ENCODE measurements at regions of chr10 and their contacts with region 1.

Region 1: DNA sequence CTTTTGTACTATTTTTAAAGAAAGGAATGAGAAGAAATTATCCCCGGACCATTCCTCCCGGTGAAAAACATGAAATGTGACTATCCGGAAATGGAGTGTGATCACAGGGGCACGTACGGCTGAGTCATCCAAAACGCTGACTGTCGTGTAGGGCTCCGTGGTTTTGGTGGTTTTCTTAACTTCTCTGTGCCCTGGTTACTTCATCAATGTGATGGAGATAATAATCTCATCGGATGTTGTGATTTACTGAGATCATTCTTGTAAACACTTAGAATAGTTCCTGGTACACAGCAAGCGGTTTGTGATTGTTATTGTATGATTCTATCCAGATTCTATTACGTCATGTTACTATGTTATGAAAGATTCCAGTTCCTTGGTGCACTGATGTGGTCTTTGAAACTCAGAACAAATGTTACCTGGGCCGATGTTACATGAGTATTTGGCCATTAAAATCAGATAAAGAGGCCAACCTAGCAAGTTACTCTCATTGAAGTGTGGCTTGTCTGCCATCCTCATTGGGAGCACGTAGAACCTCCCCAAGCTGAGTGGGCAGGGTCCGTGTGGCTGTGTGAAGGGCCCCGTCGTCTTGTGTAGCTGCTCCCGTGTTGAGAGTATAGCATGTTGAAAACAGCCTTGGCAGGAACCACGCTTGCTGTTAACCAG is 99.5 kb downstream of the CAMK1D start:
- DNase-seq: peak; percentile 88
- H3K4me3 Mint-ChIP-seq: peak overlapping the region; percentile 50
- H3K27ac Mint-ChIP-seq: peak overlapping the region; percentile 89
- H3K4me1 Mint-ChIP-seq: peaks cover 43% of the 10 kb centered on the region
- H3K27me3 Mint-ChIP-seq: no peaks in the 10 kb centered on the region

Region 2: DNA sequence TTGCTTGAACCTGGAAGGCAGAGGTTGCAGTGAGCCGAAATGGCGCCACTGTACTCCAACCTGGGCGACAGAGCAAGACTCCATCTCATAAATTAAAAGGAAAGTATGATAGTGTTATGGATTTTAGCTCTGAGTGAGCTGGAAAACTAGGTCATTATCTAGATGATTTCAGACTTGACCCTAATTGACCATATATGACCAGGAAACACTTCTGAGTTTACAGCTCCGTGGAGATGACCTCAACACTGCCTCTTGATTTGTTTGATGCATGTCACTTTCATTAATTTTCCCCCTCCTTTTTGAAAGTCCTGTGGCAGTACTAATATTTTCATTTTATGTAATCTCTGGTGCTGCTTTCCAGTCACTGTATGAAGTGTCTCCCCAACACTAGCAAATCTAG is 327.2 kb before region 1 on chr10:
- CTCF ChIA-PET with region 1: no interaction called
- POLR2A ChIA-PET with region 1: no interaction called
- intact Hi-C with region 1: loop called (anchors 1 kb)
- DNase-seq: no peak
- H3K4me3 Mint-ChIP-seq: peak overlapping the region; percentile 64
- H3K27ac Mint-ChIP-seq: peak overlapping the region; percentile 97
- H3K4me1 Mint-ChIP-seq: peaks cover 33% of the 10 kb centered on the region
- H3K27me3 Mint-ChIP-seq: no peaks in the 10 kb centered on the region

Region 3: DNA sequence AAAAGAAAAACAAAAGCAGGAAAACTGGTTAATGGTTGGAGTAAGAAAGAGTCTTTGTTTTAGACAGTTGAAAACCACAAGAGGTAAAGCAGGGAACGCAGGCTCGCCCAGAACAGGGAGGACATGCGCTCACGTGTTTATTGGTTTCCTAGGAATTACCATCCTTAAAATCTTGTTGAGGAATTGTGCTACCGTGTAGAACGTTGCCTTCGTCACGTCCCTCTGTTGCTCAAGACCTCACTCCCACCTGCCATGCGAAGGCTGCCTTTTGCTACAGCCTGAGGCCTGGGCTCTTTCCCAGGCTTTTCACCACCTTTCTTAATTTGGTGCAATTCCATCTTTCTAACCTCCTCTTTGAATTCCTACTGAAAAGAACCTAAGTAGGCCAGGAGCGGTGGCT is 161.1 kb before region 1 on chr10:
- CTCF ChIA-PET with region 1: no interaction called
- POLR2A ChIA-PET with region 1: no interaction called
- intact Hi-C with region 1: no loop called
- DNase-seq: no peak
- H3K4me3 Mint-ChIP-seq: no peak overlapping the region
- H3K27ac Mint-ChIP-seq: no peak overlapping the region
- H3K4me1 Mint-ChIP-seq: no peaks in the 10 kb centered on the region
- H3K27me3 Mint-ChIP-seq: no peaks in the 10 kb centered on the region

Region 4: DNA sequence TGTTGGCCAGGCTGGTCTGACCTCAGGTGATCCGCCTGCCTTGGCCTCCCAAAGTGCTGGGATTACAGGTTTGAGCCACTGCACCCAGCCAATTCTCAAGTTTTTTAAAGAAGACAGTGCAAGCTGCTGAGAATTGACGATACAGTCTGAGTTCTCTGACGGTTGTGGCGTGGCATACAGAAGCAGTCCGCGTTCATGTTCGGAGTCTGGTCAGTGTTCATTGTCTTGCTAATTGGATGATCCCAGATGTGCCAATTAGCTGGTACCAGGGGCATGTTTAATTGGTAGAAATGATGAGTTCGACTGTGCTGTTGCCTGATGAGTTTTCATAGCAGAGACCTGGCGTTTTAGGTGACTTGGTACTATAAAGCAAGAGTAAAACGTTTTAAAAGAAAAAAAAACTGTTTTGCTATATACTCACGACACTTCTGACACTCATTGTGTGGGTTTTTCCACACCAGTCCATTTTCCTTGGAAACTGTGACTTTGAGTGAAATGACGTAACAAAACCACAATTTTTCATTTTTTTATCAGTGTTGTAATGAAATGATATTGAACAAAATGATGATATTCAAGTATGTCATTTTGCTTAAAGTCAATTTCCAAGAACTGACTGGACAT is 67.2 kb before region 1 on chr10:
- CTCF ChIA-PET with region 1: no interaction called
- POLR2A ChIA-PET with region 1: no interaction called
- intact Hi-C with region 1: loop called (anchors 2 kb)
- DNase-seq: no peak
- H3K4me3 Mint-ChIP-seq: peak overlapping the region; percentile 12
- H3K27ac Mint-ChIP-seq: peak overlapping the region; percentile 86
- H3K4me1 Mint-ChIP-seq: peaks cover 24% of the 10 kb centered on the region
- H3K27me3 Mint-ChIP-seq: no peaks in the 10 kb centered on the region

Region 5: GRCh38 chr10:12431151-12432101 is 17.4 kb before region 1 on chr10:
- CTCF ChIA-PET with region 1: no interaction called
- POLR2A ChIA-PET with region 1: no interaction called
- intact Hi-C with region 1: no loop called
- DNase-seq: no peak
- H3K4me3 Mint-ChIP-seq: no peak overlapping the region
- H3K27ac Mint-ChIP-seq: no peak overlapping the region
- H3K4me1 Mint-ChIP-seq: peaks cover 5% of the 10 kb centered on the region
- H3K27me3 Mint-ChIP-seq: no peaks in the 10 kb centered on the region

Region 6: GRCh38 chr10:12466704-12467305 is 17.9 kb after region 1 on chr10:
- CTCF ChIA-PET with region 1: interaction called, 3 read pairs
- POLR2A ChIA-PET with region 1: no interaction called
- intact Hi-C with region 1: loop called (anchors 2 kb)
- DNase-seq: no peak
- H3K4me3 Mint-ChIP-seq: no peak overlapping the region
- H3K27ac Mint-ChIP-seq: no peak overlapping the region
- H3K4me1 Mint-ChIP-seq: peaks cover 27% of the 10 kb centered on the region
- H3K27me3 Mint-ChIP-seq: no peaks in the 10 kb centered on the region

Region 7: GRCh38 chr10:12484941-12485805 is 36.3 kb after region 1 on chr10:
- CTCF ChIA-PET with region 1: no interaction called
- POLR2A ChIA-PET with region 1: no interaction called
- intact Hi-C with region 1: no loop called
- DNase-seq: peak; percentile 50
- H3K4me3 Mint-ChIP-seq: no peak overlapping the region
- H3K27ac Mint-ChIP-seq: no peak overlapping the region
- H3K4me1 Mint-ChIP-seq: peaks cover 18% of the 10 kb centered on the region
- H3K27me3 Mint-ChIP-seq: no peaks in the 10 kb centered on the region

Region 8: DNA sequence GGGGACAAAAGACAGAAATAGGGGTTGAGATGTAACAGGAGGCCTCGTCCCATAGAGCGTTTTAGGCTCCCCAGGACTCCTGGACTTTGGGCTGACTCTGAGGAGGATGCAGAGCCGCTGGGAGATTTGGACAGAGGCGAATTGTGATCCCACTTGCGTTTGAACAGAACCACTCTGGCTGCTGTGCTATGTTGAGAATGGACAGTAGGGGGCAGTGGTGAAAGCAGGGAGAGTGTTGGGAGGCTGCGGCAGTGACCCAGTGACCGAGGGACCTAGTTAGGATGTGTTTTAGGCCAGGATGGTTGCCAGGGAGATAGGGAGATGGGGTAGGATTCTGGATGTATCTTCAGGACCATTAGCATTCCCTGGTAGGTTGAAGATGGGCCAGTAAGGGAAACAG is 281.0 kb after region 1 on chr10:
- CTCF ChIA-PET with region 1: no interaction called
- POLR2A ChIA-PET with region 1: no interaction called
- intact Hi-C with region 1: loop called (anchors 5 kb)
- DNase-seq: peak; percentile 34
- H3K4me3 Mint-ChIP-seq: no peak overlapping the region
- H3K27ac Mint-ChIP-seq: no peak overlapping the region
- H3K4me1 Mint-ChIP-seq: peaks cover 21% of the 10 kb centered on the region
- H3K27me3 Mint-ChIP-seq: no peaks in the 10 kb centered on the region